ENCODE measurements at regions of chr4 and their contacts with region 1.

Region 1: GRCh38 chr4:169437299-169438047 is 166.7 kb upstream of the SH3RF1 start:
- DNase-seq: no peak
- H3K4me3 ChIP-seq: no peak overlapping the region
- CTCF ChIP-seq: no peak

Region 2: GRCh38 chr4:169341490-169341889 is 96.0 kb before region 1 on chr4:
- in situ Hi-C with region 1: loop called (anchors 5 kb)
- DNase-seq: peak; percentile 95
- H3K4me3 ChIP-seq: no peak overlapping the region
- CTCF ChIP-seq: no peak